MCF 10A (cell line): ENCODE measurements at regions of chr1 and their contacts with region 1.

Region 1: DNA sequence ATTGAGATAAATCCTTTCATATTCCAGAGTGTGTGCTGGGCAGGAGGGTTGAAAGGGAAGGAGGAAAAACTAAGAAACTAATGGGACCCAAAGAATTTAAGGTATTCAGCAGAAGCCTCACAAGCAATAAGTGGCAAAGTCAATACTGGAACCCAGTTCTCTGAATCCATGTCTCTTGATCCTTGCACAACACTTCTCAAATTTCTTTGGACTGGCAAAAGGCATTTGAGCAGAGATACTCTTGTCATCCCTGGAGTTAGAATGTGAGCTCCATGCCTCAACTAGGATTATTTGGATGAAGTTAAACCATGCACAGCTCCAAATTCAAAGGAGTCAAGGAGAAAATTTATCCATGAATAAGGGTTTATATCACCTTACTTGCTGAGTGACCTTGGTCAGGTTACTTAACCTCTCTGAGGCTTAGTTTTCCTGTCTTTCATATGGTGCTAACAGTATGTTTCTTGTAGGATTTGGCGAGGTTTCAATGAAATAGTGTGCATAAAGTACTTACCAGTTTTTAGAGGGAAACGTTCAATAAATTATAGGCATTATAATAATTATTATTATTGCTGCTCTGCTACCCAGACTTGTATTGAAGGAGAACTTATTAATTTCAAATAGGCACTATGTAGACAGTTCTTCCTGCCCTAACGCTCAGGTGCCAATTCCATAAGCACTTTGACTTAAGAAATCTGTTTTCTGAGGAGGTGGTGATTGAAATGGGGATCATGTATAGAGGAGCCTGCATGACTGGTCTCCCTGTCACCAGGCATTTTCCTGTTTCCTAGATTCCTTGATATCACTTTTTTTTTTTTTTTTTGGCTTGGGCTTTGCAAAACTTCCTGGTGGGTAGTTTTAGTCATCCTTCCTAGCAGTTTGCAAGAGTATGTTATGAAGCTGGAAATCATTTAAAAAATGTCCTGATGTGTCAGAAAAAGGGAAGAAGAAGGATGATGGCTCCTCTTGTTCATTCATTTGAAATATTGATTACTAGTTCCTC is 125.0 kb upstream of the JUN start:
- DNase-seq: peak; percentile 54
- H3K4me3 Mint-ChIP-seq: no peak overlapping the region
- H3K27ac Mint-ChIP-seq: no peak overlapping the region
- H3K4me1 Mint-ChIP-seq: peaks cover 23% of the 10 kb centered on the region
- H3K27me3 Mint-ChIP-seq: no peaks in the 10 kb centered on the region
- CTCF ChIP-seq: no peak

Region 2: GRCh38 chr1:58755468-58755872 is 153.4 kb before region 1 on chr1:
- CTCF ChIA-PET with region 1: no interaction called
- POLR2A ChIA-PET with region 1: no interaction called
- intact Hi-C with region 1: no loop called
- DNase-seq: peak; percentile 98
- H3K4me3 Mint-ChIP-seq: peak overlapping the region; percentile 49
- H3K27ac Mint-ChIP-seq: peak overlapping the region; percentile 91
- H3K4me1 Mint-ChIP-seq: peaks cover 39% of the 10 kb centered on the region
- H3K27me3 Mint-ChIP-seq: no peaks in the 10 kb centered on the region
- CTCF ChIP-seq: no peak

Region 3: GRCh38 chr1:58922302-58923089 is 13.6 kb after region 1 on chr1:
- CTCF ChIA-PET with region 1: interaction called, 7 read pairs
- POLR2A ChIA-PET with region 1: interaction called, 21 read pairs
- intact Hi-C with region 1: no loop called
- DNase-seq: peak; percentile 91
- H3K4me3 Mint-ChIP-seq: peak overlapping the region; percentile 7
- H3K27ac Mint-ChIP-seq: peak overlapping the region; percentile 87
- H3K4me1 Mint-ChIP-seq: peaks cover 52% of the 10 kb centered on the region
- H3K27me3 Mint-ChIP-seq: no peaks in the 10 kb centered on the region
- CTCF ChIP-seq: no peak

Region 4: GRCh38 chr1:59079434-59080140 is 170.7 kb after region 1 on chr1:
- CTCF ChIA-PET with region 1: no interaction called
- POLR2A ChIA-PET with region 1: no interaction called
- intact Hi-C with region 1: no loop called
- DNase-seq: no peak
- H3K4me3 Mint-ChIP-seq: no peak overlapping the region
- H3K27ac Mint-ChIP-seq: no peak overlapping the region
- H3K4me1 Mint-ChIP-seq: peaks cover 11% of the 10 kb centered on the region
- H3K27me3 Mint-ChIP-seq: no peaks in the 10 kb centered on the region
- CTCF ChIP-seq: no peak